ENCODE measurements at regions of chr15 and their contacts with region 1.

Region 1: GRCh38 chr15:101320501-101321052 is 25.5 kb upstream of the SNRPA1 start:
- DNase-seq: peak in 1 of 2 experiments; percentile 71
- H3K4me3 ChIP-seq: no peak overlapping the region
- H3K27ac ChIP-seq: no peak overlapping the region
- H3K4me1 ChIP-seq: peaks cover 0 to 3% (median 0%) of the 10 kb centered on the region in 4 experiments; a peak in 1 of 7 replicates
- H3K27me3 ChIP-seq: no peaks in the 10 kb centered on the region; a peak in 1 of 7 replicates
- CTCF ChIP-seq: peak; percentile 67 to 81 (median 79)
- EP300 ChIP-seq: no peak
- POLR2A ChIP-seq: no peak
- RAD21 ChIP-seq: peak; percentile 46 to 64

Region 2: GRCh38 chr15:101288908-101289513 is 31.6 kb before region 1 on chr15:
- CTCF ChIA-PET with region 1: interaction called, 11 read pairs
- POLR2A ChIA-PET with region 1: interaction called, 3 read pairs
- DNase-seq: no peak
- H3K4me3 ChIP-seq: no peak overlapping the region
- H3K27ac ChIP-seq: no peak overlapping the region
- H3K4me1 ChIP-seq: peaks cover 3 to 5% (median 4%) of the 10 kb centered on the region in 4 experiments; a peak in 4 of 7 replicates
- H3K27me3 ChIP-seq: no peaks in the 10 kb centered on the region
- CTCF ChIP-seq: peak in 2 of 3 experiments; percentile 51 to 55; a peak in 2 of 4 replicates
- EP300 ChIP-seq: no peak
- POLR2A ChIP-seq: no peak
- RAD21 ChIP-seq: peak; percentile 61 to 62

Region 3: GRCh38 chr15:101307048-101307896 is 13.3 kb before region 1 on chr15:
- CTCF ChIA-PET with region 1: interaction called, 94 read pairs
- POLR2A ChIA-PET with region 1: interaction called, 4 read pairs
- DNase-seq: peak in 1 of 2 experiments; percentile 39
- H3K4me3 ChIP-seq: no peak overlapping the region
- H3K27ac ChIP-seq: no peak overlapping the region
- H3K4me1 ChIP-seq: no peaks in the 10 kb centered on the region
- H3K27me3 ChIP-seq: no peaks in the 10 kb centered on the region
- CTCF ChIP-seq: no peak
- EP300 ChIP-seq: no peak
- POLR2A ChIP-seq: no peak
- RAD21 ChIP-seq: no peak

Region 4: GRCh38 chr15:101368086-101368780 is 47.7 kb after region 1 on chr15:
- CTCF ChIA-PET with region 1: interaction called, 10 read pairs
- POLR2A ChIA-PET with region 1: no interaction called
- DNase-seq: peak in 1 of 2 experiments; percentile 41
- H3K4me3 ChIP-seq: no peak overlapping the region
- H3K27ac ChIP-seq: no peak overlapping the region
- H3K4me1 ChIP-seq: peaks cover 0 to 16% (median 10%) of the 10 kb centered on the region in 4 experiments; a peak in 6 of 7 replicates
- H3K27me3 ChIP-seq: no peaks in the 10 kb centered on the region; a peak in 3 of 7 replicates
- CTCF ChIP-seq: no peak
- EP300 ChIP-seq: no peak
- POLR2A ChIP-seq: no peak
- RAD21 ChIP-seq: no peak

Region 5: DNA sequence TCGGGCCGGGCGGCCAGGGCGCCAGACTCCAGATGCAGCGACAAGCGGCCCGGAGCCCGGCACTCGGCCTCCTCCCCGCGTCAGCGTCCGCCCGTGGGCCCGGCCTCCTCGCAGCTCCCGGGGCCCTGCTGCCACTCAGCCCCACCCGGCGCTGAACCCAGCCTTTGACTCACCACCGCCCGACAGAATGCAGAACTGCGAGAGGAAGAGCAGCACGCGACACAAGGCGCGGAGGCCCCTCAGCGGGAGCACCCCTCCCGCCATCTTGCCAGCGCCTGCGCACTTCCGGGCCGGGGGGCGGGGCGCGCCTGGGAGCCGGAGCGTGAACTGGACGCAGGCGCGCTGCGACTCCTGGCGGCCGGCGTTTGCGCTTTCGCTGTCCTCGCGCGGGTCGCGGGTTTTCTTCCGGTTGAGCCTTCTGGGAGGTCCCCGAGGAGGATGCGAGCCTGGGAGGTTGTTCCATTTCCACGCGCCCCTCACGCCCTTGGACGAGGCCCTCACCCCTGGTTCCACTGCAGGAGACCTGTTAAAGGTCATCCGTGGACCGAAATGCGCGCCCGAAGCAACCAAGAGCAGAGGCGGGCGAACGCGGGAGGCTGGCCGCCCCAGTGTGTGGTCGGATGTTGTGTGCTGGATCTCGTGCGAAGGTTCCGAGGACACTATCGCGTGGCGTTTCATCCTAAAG is 331.7 kb after region 1 on chr15 and contains the start of gene TM2D3:
- CTCF ChIA-PET with region 1: interaction called, 14 read pairs
- POLR2A ChIA-PET with region 1: no interaction called
- DNase-seq: peak; percentile 65 to 94
- H3K4me3 ChIP-seq: peak within 1 kb of the TSS; percentile 87 to 98 (median 95)
- H3K27ac ChIP-seq: peak within 1 kb of the TSS; percentile 46; the same call in 1 of the 2 replicates
- H3K4me1 ChIP-seq: peaks cover 0 to 3% (median 0%) of the 10 kb centered on the region in 4 experiments; a peak in 2 of 7 replicates
- H3K27me3 ChIP-seq: no peaks in the 10 kb centered on the region; a peak in 1 of 7 replicates
- CTCF ChIP-seq: peak; percentile 77 to 79 (median 78)
- EP300 ChIP-seq: no peak
- POLR2A ChIP-seq: peak in 1 of 2 experiments; percentile 75; a peak in 2 of 3 replicates
- RAD21 ChIP-seq: peak; percentile 53 to 66
- total RNA-seq, gene TM2D3: 24.2 and 28.0 TPM in 2 replicates

Measured in H1 (cell line).